Ovary (tissue), 10 donors: ENCODE measurements at regions of chr13 and their contacts with region 1.

Region 1: GRCh38 chr13:33710924-33711323 is 107.0 kb upstream of the RFC3 start:
- DNase-seq: no peak
- H3K4me3 ChIP-seq: no peak overlapping the region
- H3K27ac ChIP-seq: no peak overlapping the region
- H3K4me1 ChIP-seq: no peaks in the 10 kb centered on the region
- H3K27me3 ChIP-seq: no peaks in the 10 kb centered on the region
- CTCF ChIP-seq: no peak
- EP300 ChIP-seq: no peak
- POLR2A ChIP-seq: no peak

Region 2: GRCh38 chr13:33183431-33184111 is 527.4 kb before region 1 on chr13:
- intact Hi-C with region 1: no loop called
- DNase-seq: no peak
- H3K4me3 ChIP-seq: no peak overlapping the region
- H3K27ac ChIP-seq: no peak overlapping the region
- H3K4me1 ChIP-seq: peaks cover 28% of the 10 kb centered on the region
- H3K27me3 ChIP-seq: no peaks in the 10 kb centered on the region
- CTCF ChIP-seq: no peak
- EP300 ChIP-seq: no peak
- POLR2A ChIP-seq: no peak

Region 3: GRCh38 chr13:33554919-33555791 is 155.8 kb before region 1 on chr13:
- intact Hi-C with region 1: loop called in 1 of 4 experiments (anchors 10 kb)
- DNase-seq: no peak
- H3K4me3 ChIP-seq: no peak overlapping the region
- H3K27ac ChIP-seq: no peak overlapping the region
- H3K4me1 ChIP-seq: peaks cover 2% of the 10 kb centered on the region
- H3K27me3 ChIP-seq: no peaks in the 10 kb centered on the region
- CTCF ChIP-seq: no peak
- EP300 ChIP-seq: no peak
- POLR2A ChIP-seq: no peak

Region 4: GRCh38 chr13:33571618-33572017 is 139.3 kb before region 1 on chr13:
- intact Hi-C with region 1: no loop called
- DNase-seq: no peak
- H3K4me3 ChIP-seq: no peak overlapping the region
- H3K27ac ChIP-seq: no peak overlapping the region
- H3K4me1 ChIP-seq: no peaks in the 10 kb centered on the region
- H3K27me3 ChIP-seq: no peaks in the 10 kb centered on the region
- CTCF ChIP-seq: no peak
- EP300 ChIP-seq: no peak
- POLR2A ChIP-seq: no peak

Region 5: DNA sequence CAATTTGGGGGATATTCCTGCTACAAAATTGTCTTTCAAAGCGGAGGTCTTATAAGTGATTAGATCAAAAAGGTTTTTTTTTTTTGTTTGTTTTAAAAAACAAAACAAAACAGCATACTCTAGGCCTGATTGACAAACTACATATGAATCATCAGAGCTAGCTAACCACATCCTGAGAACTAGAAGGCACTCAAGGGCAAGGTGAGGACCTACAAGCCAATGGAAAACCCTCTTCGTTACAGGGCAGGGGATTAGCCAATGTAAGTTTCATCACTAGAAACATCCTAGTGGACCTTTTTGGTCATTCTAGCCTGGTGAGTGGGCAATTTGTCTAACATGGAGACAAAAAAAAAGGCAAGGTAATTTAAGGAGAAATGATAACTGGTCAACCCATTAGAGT is 535.6 kb after region 1 on chr13:
- intact Hi-C with region 1: no loop called
- DNase-seq: no peak
- H3K4me3 ChIP-seq: no peak overlapping the region
- H3K27ac ChIP-seq: no peak overlapping the region
- H3K4me1 ChIP-seq: no peaks in the 10 kb centered on the region
- H3K27me3 ChIP-seq: no peaks in the 10 kb centered on the region
- CTCF ChIP-seq: no peak
- EP300 ChIP-seq: no peak
- POLR2A ChIP-seq: no peak

Region 6: GRCh38 chr13:34779171-34779570 is 1068.2 kb after region 1 on chr13:
- intact Hi-C with region 1: no loop called
- DNase-seq: no peak
- H3K4me3 ChIP-seq: no peak overlapping the region
- H3K27ac ChIP-seq: no peak overlapping the region
- H3K4me1 ChIP-seq: no peaks in the 10 kb centered on the region
- H3K27me3 ChIP-seq: no peaks in the 10 kb centered on the region
- CTCF ChIP-seq: no peak
- EP300 ChIP-seq: no peak
- POLR2A ChIP-seq: no peak